Dendritic cell treated with granulocyte-macrophage colony-stimulating factor and Interleukin-4, amounts not matched to agents 40 ng/mL and 50 ng/mL, for 4 days (primary cell): ENCODE measurements at regions of chr5 and their contacts with region 1.

Region 1: GRCh38 chr5:149731639-149732323 is 1.7 kb downstream of the PPARGC1B start:
- H3K4me3 Mint-ChIP-seq: peak overlapping the region; percentile 91
- H3K27ac Mint-ChIP-seq: peak overlapping the region; percentile 95
- H3K4me1 Mint-ChIP-seq: peaks cover 48% of the 10 kb centered on the region
- H3K27me3 Mint-ChIP-seq: no peaks in the 10 kb centered on the region

Region 2: GRCh38 chr5:149474212-149474618 is 257.6 kb before region 1 on chr5:
- intact Hi-C with region 1: no loop called
- H3K4me3 Mint-ChIP-seq: no peak overlapping the region
- H3K27ac Mint-ChIP-seq: no peak overlapping the region
- H3K4me1 Mint-ChIP-seq: no peaks in the 10 kb centered on the region
- H3K27me3 Mint-ChIP-seq: peaks cover 4% of the 10 kb centered on the region

Region 3: DNA sequence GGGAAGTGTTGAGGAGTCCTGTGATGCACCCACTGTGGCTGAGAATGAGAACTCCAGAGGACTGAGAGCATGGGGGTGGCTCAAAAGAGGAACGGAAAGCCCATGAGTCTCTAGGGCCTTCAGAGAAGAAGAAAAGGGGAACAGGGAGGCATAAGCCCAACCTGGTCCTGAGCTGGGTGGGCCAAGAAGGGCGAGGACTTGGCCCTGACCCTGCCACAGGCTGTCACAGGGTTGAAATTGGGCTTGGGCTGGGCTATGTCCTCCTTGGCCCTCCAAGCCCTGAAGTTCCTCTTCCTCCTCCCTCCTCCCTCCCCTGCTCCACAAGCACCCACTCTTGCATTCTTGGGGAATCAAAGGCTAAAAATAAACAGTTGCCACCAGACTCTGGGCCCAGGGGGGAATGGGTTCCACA is 51.0 kb before region 1 on chr5:
- intact Hi-C with region 1: loop called (anchors 2 kb)
- H3K4me3 Mint-ChIP-seq: peak overlapping the region; percentile 17
- H3K27ac Mint-ChIP-seq: peak overlapping the region; percentile 91
- H3K4me1 Mint-ChIP-seq: peaks cover 92% of the 10 kb centered on the region
- H3K27me3 Mint-ChIP-seq: no peaks in the 10 kb centered on the region